Lower leg skin (tissue), 4 donors: ENCODE measurements at regions of chr1 and their contacts with region 1.

Region 1: GRCh38 chr1:173062156-173062938 is 11.6 kb upstream of the TNFSF18 start:
- DNase-seq: no peak
- H3K4me3 ChIP-seq: no peak overlapping the region
- CTCF ChIP-seq: no peak
- POLR2A ChIP-seq: no peak

Region 2: DNA sequence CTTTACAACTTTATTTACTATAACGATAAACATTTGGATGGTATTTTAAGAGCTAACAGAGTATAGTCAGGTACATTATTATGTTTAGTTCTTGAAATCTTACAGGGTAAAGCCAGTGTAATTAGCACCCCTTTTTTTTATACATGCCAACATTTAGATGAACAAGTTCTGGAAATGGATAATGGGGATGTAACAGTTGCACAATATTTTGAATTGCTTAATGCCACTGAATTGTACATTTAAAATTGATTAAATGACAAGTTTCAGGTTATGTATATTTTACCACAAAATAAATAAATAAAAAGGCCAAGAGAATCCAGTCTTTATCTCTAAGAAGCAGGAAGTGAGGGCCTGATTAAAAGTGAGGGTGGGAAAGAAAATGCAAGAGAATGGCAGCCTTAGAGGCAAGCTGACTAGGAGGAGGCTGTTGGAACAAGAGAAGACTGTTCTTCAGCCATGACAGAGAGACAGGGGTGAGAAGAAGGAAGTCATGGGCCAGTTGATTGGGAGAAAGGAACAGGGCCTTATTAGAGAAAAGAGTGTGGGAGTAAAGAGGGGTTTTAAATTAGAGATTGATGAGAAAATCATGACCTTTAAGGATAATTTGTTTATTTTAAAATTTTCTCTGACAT is 38.2 kb after region 1 on chr1:
- intact Hi-C with region 1: loop called (anchors 1 kb)
- DNase-seq: no peak
- H3K4me3 ChIP-seq: no peak overlapping the region
- CTCF ChIP-seq: no peak
- POLR2A ChIP-seq: no peak

Region 3: DNA sequence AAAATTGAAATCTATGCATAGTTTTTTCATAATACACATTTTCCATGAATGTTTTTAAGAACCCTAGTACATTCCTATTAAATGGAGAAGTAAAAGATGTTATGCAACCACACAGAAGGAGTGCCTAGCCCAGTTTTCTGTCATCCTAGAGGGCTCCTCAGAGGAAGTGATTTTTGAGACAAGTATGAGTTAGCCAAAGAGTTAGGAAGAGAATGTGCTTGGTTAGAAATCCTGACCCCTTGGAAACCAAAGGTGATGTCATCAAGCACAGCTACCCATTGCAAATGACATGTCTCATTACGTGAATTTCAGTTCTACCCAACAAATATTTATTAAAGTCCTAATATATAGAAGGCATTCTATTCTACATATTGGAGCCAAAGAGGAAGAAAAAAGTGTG is 233.6 kb after region 1 on chr1:
- intact Hi-C with region 1: no loop called
- DNase-seq: no peak
- H3K4me3 ChIP-seq: no peak overlapping the region
- CTCF ChIP-seq: no peak
- POLR2A ChIP-seq: no peak

Region 4: GRCh38 chr1:173451981-173452380 is 389.6 kb after region 1 on chr1:
- intact Hi-C with region 1: no loop called
- DNase-seq: no peak
- H3K4me3 ChIP-seq: no peak overlapping the region
- CTCF ChIP-seq: no peak
- POLR2A ChIP-seq: no peak